ENCODE measurements at regions of chr14 and their contacts with region 1.

Region 1: DNA sequence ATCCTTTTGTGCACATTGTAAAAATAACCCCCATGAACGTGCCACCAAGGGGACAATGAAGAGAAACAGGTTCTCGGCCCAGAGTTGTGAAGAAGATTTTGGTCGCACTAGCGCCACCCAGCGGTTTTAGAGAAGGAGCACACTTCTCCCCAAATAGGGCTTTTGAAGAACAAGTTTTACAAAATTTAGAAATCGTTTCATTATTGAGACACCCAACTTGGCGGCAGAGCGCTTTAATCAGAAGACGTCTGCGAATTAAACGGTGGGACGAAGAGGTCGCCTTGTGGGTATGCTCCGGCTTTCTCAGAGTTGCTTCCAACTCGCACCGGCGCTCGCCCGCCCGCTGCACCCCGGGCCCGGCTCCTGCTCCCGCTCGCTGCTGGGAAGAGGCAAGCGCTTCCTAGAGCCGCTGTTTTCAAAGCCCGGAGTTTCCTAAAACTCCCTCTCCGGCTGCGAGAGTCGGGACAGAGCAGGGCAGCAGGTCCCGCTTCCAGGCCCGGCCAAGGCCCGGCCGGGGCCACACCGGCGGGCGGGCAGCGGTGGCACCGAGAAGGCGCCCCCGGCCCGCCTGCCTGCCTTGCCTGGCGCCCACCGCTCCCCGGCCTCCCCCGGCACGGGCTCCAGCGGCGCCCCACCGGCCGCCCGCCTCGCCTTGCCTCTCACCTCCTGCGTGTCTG is 673 bp downstream of the FOXA1 start:
- DNase-seq: peak; percentile 83
- H3K4me3 Mint-ChIP-seq: peak overlapping the region; percentile 81
- H3K27ac Mint-ChIP-seq: peak overlapping the region; percentile 98
- H3K4me1 Mint-ChIP-seq: peaks cover 7% of the 10 kb centered on the region
- H3K27me3 Mint-ChIP-seq: no peaks in the 10 kb centered on the region
- CTCF ChIP-seq: peak; percentile 76

Region 2: GRCh38 chr14:37246427-37246914 is 347.9 kb before region 1 on chr14:
- CTCF ChIA-PET with region 1: interaction called, 13 read pairs
- intact Hi-C with region 1: loop called (anchors 1 kb)
- DNase-seq: no peak
- H3K4me3 Mint-ChIP-seq: no peak overlapping the region
- H3K27ac Mint-ChIP-seq: no peak overlapping the region
- H3K4me1 Mint-ChIP-seq: no peaks in the 10 kb centered on the region
- H3K27me3 Mint-ChIP-seq: no peaks in the 10 kb centered on the region
- CTCF ChIP-seq: peak; percentile 60

Region 3: GRCh38 chr14:37422319-37422718 is 172.1 kb before region 1 on chr14:
- CTCF ChIA-PET with region 1: no interaction called
- intact Hi-C with region 1: loop called (anchors 2 kb)
- DNase-seq: no peak
- H3K4me3 Mint-ChIP-seq: no peak overlapping the region
- H3K27ac Mint-ChIP-seq: peak overlapping the region; percentile 23
- H3K4me1 Mint-ChIP-seq: peaks cover 15% of the 10 kb centered on the region
- H3K27me3 Mint-ChIP-seq: no peaks in the 10 kb centered on the region
- CTCF ChIP-seq: no peak

Region 4: DNA sequence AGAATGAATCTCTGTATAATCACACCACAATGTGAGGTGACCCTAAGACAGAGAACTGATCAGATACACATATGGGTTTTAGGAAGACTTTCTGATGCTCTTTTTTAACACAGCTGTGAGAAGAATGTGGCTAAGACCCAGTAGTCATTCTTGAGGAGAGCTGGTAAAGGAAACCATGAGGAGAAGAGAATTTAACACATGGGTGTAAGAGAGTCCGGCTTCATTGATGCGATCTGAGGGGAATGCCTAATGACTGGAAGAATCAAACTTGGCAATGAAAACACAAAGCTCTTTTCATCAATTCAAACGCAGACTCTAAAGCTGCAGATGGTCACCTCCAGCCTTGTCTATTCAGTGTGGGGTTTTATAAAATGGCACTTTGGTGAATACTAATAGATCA is 78.6 kb before region 1 on chr14:
- CTCF ChIA-PET with region 1: interaction called, 10 read pairs
- intact Hi-C with region 1: no loop called
- DNase-seq: no peak
- H3K4me3 Mint-ChIP-seq: no peak overlapping the region
- H3K27ac Mint-ChIP-seq: no peak overlapping the region
- H3K4me1 Mint-ChIP-seq: no peaks in the 10 kb centered on the region
- H3K27me3 Mint-ChIP-seq: no peaks in the 10 kb centered on the region
- CTCF ChIP-seq: no peak

Region 5: GRCh38 chr14:37553935-37554550 is 40.3 kb before region 1 on chr14:
- CTCF ChIA-PET with region 1: no interaction called
- intact Hi-C with region 1: no loop called
- DNase-seq: no peak
- H3K4me3 Mint-ChIP-seq: no peak overlapping the region
- H3K27ac Mint-ChIP-seq: no peak overlapping the region
- H3K4me1 Mint-ChIP-seq: peaks cover 8% of the 10 kb centered on the region
- H3K27me3 Mint-ChIP-seq: no peaks in the 10 kb centered on the region
- CTCF ChIP-seq: no peak

Region 6: DNA sequence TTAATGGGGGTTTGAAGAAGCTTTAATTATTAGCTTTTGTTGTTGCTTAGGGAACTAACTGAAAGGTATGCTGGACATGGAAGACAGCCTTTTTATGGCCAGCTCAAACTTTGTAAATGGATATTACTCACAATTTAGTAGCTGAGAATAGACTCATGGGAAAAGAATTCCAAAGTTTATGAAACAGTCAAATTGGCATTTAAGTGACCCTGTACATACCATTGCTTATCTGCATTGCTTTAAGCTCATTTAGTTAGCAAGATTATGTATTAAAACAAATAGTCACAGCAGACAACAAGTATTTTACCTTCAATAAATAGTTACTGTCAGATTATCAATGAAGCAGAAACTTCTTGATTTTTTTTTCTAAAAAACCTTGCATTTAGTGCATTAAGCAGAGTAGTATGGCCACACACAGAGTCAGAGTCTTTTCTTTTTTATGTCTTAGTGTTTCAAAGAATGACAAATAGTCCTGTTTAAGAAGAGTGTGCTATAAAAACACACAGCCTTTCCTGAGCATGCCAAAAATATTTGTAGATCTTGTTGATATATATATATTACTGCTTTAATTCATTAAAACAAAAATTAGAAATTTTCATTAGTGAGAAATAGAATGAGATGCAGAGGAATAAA is 103.2 kb after region 1 on chr14:
- CTCF ChIA-PET with region 1: no interaction called
- intact Hi-C with region 1: loop called (anchors 2 kb)
- DNase-seq: no peak
- H3K4me3 Mint-ChIP-seq: no peak overlapping the region
- H3K27ac Mint-ChIP-seq: peak overlapping the region; percentile 27
- H3K4me1 Mint-ChIP-seq: peaks cover 38% of the 10 kb centered on the region
- H3K27me3 Mint-ChIP-seq: no peaks in the 10 kb centered on the region
- CTCF ChIP-seq: no peak

Region 7: GRCh38 chr14:37796703-37797416 is 202.5 kb after region 1 on chr14:
- CTCF ChIA-PET with region 1: no interaction called
- intact Hi-C with region 1: loop called (anchors 5 kb)
- DNase-seq: peak; percentile 13
- H3K4me3 Mint-ChIP-seq: no peak overlapping the region
- H3K27ac Mint-ChIP-seq: no peak overlapping the region
- H3K4me1 Mint-ChIP-seq: no peaks in the 10 kb centered on the region
- H3K27me3 Mint-ChIP-seq: no peaks in the 10 kb centered on the region
- CTCF ChIP-seq: no peak

Region 8: GRCh38 chr14:37874429-37875191 is 280.2 kb after region 1 on chr14:
- CTCF ChIA-PET with region 1: interaction called, 4 read pairs
- intact Hi-C with region 1: loop called (anchors 2 kb)
- DNase-seq: peak; percentile 90
- H3K4me3 Mint-ChIP-seq: no peak overlapping the region
- H3K27ac Mint-ChIP-seq: peak overlapping the region; percentile 61
- H3K4me1 Mint-ChIP-seq: peaks cover 23% of the 10 kb centered on the region
- H3K27me3 Mint-ChIP-seq: no peaks in the 10 kb centered on the region
- CTCF ChIP-seq: peak; percentile 66